Activated CD4-positive, alpha-beta T cell treated with anti-CD3 and anti-CD28 coated beads for 36 hours (primary cell): ENCODE measurements at regions of chr6 and their contacts with region 1.

Region 1: DNA sequence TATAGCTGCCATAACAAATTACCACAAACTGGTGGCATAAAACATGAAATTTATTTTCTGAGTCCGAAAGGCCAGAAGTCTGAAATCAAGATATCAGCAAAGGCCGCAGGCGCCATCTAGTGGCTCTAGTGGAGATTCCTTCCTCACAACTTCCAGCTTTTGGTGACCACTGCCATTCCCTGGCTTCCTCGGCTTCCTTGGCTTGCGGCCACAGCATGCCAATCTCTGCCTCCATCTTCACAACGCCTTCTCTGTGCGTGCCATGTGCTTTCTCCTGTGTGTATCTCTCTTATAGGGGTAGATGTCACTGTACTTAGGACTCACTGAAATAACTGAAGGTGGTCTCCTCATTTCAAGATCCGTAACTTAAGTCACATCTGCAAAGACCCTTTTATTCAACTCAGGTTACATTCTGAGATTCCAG is 5.4 kb upstream of the PLAGL1 start:
- DNase-seq: peak; percentile 80
- ATAC-seq: no peak
- H3K4me3 Mint-ChIP-seq: no peak overlapping the region
- H3K27ac Mint-ChIP-seq: no peak overlapping the region
- H3K4me1 Mint-ChIP-seq: no peaks in the 10 kb centered on the region
- H3K27me3 Mint-ChIP-seq: peaks cover 14% of the 10 kb centered on the region

Region 2: GRCh38 chr6:143529095-143529494 is 484.4 kb before region 1 on chr6:
- CTCF ChIA-PET with region 1: no interaction called
- POLR2A ChIA-PET with region 1: no interaction called
- intact Hi-C with region 1: loop called in 1 of 2 experiments (anchors 5 kb)
- DNase-seq: peak; percentile 28
- ATAC-seq: peak; percentile 33
- H3K4me3 Mint-ChIP-seq: no peak overlapping the region
- H3K27ac Mint-ChIP-seq: no peak overlapping the region
- H3K4me1 Mint-ChIP-seq: peaks cover 11% of the 10 kb centered on the region
- H3K27me3 Mint-ChIP-seq: no peaks in the 10 kb centered on the region

Region 3: GRCh38 chr6:143782481-143782880 is 231.0 kb before region 1 on chr6:
- CTCF ChIA-PET with region 1: no interaction called
- POLR2A ChIA-PET with region 1: no interaction called
- intact Hi-C with region 1: no loop called
- DNase-seq: no peak
- ATAC-seq: no peak
- H3K4me3 Mint-ChIP-seq: no peak overlapping the region
- H3K27ac Mint-ChIP-seq: no peak overlapping the region
- H3K4me1 Mint-ChIP-seq: no peaks in the 10 kb centered on the region
- H3K27me3 Mint-ChIP-seq: no peaks in the 10 kb centered on the region

Region 4: GRCh38 chr6:143934867-143935266 is 78.6 kb before region 1 on chr6:
- CTCF ChIA-PET with region 1: interaction called, 125 read pairs
- POLR2A ChIA-PET with region 1: no interaction called
- intact Hi-C with region 1: no loop called
- DNase-seq: no peak
- ATAC-seq: no peak
- H3K4me3 Mint-ChIP-seq: no peak overlapping the region
- H3K27ac Mint-ChIP-seq: no peak overlapping the region
- H3K4me1 Mint-ChIP-seq: peaks cover under 1% of the 10 kb centered on the region
- H3K27me3 Mint-ChIP-seq: peaks cover 3% of the 10 kb centered on the region

Region 5: GRCh38 chr6:143973097-143973966 is 40.2 kb before region 1 on chr6:
- CTCF ChIA-PET with region 1: interaction called, 13 read pairs
- POLR2A ChIA-PET with region 1: no interaction called
- intact Hi-C with region 1: no loop called
- DNase-seq: no peak
- ATAC-seq: no peak
- H3K4me3 Mint-ChIP-seq: no peak overlapping the region
- H3K27ac Mint-ChIP-seq: no peak overlapping the region
- H3K4me1 Mint-ChIP-seq: peaks cover 2% of the 10 kb centered on the region
- H3K27me3 Mint-ChIP-seq: no peaks in the 10 kb centered on the region

Region 6: GRCh38 chr6:144140867-144141266 is 127.4 kb after region 1 on chr6:
- CTCF ChIA-PET with region 1: no interaction called
- POLR2A ChIA-PET with region 1: no interaction called
- intact Hi-C with region 1: no loop called
- DNase-seq: no peak
- ATAC-seq: no peak
- H3K4me3 Mint-ChIP-seq: no peak overlapping the region
- H3K27ac Mint-ChIP-seq: no peak overlapping the region
- H3K4me1 Mint-ChIP-seq: no peaks in the 10 kb centered on the region
- H3K27me3 Mint-ChIP-seq: peaks cover 7% of the 10 kb centered on the region

Region 7: GRCh38 chr6:144171406-144171805 is 157.9 kb after region 1 on chr6:
- CTCF ChIA-PET with region 1: no interaction called
- POLR2A ChIA-PET with region 1: no interaction called
- intact Hi-C with region 1: no loop called
- DNase-seq: no peak
- ATAC-seq: no peak
- H3K4me3 Mint-ChIP-seq: no peak overlapping the region
- H3K27ac Mint-ChIP-seq: no peak overlapping the region
- H3K4me1 Mint-ChIP-seq: no peaks in the 10 kb centered on the region
- H3K27me3 Mint-ChIP-seq: no peaks in the 10 kb centered on the region